Breast epithelium (tissue), 4 donors: ENCODE measurements at regions of chr18 and their contacts with region 1.

Region 1: GRCh38 chr18:45566025-45566740 is 49.1 kb upstream of the SLC14A2 start:
- DNase-seq: no peak
- H3K4me3 ChIP-seq: peak overlapping the region in 1 of 3 donors; percentile 8
- H3K27ac ChIP-seq: peak overlapping the region in 1 of 2 donors; percentile 32
- H3K4me1 ChIP-seq: no peaks in the 10 kb centered on the region
- H3K27me3 ChIP-seq: no peaks in the 10 kb centered on the region
- CTCF ChIP-seq: no peak
- POLR2A ChIP-seq: no peak

Region 2: DNA sequence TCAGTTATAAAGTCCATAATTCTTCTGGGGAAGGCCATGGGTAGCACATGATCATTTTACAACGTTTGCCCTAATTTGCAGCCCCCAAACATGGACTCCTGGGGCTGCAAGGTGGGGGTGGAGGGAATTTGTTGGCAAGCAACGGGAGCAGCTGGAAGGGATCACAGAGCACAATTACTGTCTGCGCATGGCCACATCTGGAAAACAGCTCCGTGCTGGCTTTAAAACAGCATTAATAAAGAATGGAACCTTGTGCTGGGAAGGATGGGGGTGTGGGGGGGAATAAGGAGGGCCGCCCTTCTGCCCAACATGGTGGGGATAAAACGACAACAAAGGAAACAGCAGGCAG is 11.8 kb before region 1 on chr18:
- intact Hi-C with region 1: no loop called
- DNase-seq: no peak
- H3K4me3 ChIP-seq: no peak overlapping the region
- H3K27ac ChIP-seq: no peak overlapping the region
- H3K4me1 ChIP-seq: no peaks in the 10 kb centered on the region
- H3K27me3 ChIP-seq: no peaks in the 10 kb centered on the region
- CTCF ChIP-seq: no peak
- POLR2A ChIP-seq: no peak

Region 3: GRCh38 chr18:45993389-45993788 is 427.2 kb after region 1 on chr18:
- intact Hi-C with region 1: no loop called
- DNase-seq: no peak
- H3K4me3 ChIP-seq: no peak overlapping the region
- H3K27ac ChIP-seq: no peak overlapping the region
- H3K4me1 ChIP-seq: no peaks in the 10 kb centered on the region
- H3K27me3 ChIP-seq: no peaks in the 10 kb centered on the region
- CTCF ChIP-seq: no peak
- POLR2A ChIP-seq: no peak

Region 4: DNA sequence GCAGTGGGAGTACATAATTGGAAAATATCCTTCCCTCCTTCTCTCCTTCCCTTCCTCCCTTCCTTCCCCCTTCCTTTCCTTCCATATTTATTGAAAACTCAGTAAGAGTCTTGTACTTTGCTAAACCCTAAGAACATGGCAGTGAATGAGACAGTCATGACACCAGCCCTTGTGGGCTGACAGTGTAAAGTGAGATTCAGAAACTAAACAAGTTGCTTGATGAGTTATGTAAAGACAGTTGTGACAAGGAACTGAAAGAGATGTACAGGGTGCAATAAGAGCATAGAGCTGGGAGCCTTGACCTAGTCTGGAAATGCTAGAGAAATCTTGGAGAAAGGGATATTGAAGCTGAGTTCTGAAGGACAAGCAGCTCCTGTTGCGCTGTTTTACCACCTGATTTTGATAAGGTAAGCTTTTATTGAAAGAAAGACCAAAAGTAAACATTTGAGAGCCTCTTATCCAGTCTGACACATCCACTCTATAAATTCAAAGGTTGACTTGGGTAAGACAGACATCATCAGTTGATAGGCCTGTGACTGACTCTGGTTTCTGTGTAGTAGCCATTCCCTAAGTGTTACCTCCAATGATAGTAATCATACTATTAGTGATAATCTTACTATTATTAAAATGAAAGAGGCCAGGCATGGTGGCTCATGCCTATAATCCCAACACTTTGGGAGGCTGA is 1751.8 kb after region 1 on chr18:
- intact Hi-C with region 1: loop called (anchors 5 kb)
- DNase-seq: no peak
- H3K4me3 ChIP-seq: no peak overlapping the region
- H3K27ac ChIP-seq: no peak overlapping the region
- H3K4me1 ChIP-seq: no peaks in the 10 kb centered on the region
- H3K27me3 ChIP-seq: peaks cover 0 to 7% of the 10 kb centered on the region in 2 donors
- CTCF ChIP-seq: no peak
- POLR2A ChIP-seq: no peak